ENCODE measurements at regions of chr2 and their contacts with region 1.

Region 1: GRCh38 chr2:24075915-24076848 is at the start of gene SF3B6:
- DNase-seq: peak; percentile 100
- ATAC-seq: peak; percentile 88
- H3K4me3 ChIP-seq: peak within 1 kb of the TSS; percentile 97
- H3K27ac ChIP-seq: peak within 1 kb of the TSS; percentile 49
- H3K4me1 ChIP-seq: peaks cover 13% of the 10 kb centered on the region
- H3K27me3 ChIP-seq: no peaks in the 10 kb centered on the region
- CTCF ChIP-seq: no peak
- total RNA-seq, gene SF3B6: 139 and 220 TPM in 2 replicates

Region 2: GRCh38 chr2:23734416-23734815 is 341.8 kb before region 1 on chr2:
- CTCF ChIA-PET with region 1: no interaction called
- POLR2A ChIA-PET with region 1: no interaction called
- intact Hi-C with region 1: no loop called
- DNase-seq: no peak
- ATAC-seq: no peak
- H3K4me3 ChIP-seq: no peak overlapping the region
- H3K27ac ChIP-seq: no peak overlapping the region
- H3K4me1 ChIP-seq: no peaks in the 10 kb centered on the region
- H3K27me3 ChIP-seq: no peaks in the 10 kb centered on the region
- CTCF ChIP-seq: no peak

Region 3: DNA sequence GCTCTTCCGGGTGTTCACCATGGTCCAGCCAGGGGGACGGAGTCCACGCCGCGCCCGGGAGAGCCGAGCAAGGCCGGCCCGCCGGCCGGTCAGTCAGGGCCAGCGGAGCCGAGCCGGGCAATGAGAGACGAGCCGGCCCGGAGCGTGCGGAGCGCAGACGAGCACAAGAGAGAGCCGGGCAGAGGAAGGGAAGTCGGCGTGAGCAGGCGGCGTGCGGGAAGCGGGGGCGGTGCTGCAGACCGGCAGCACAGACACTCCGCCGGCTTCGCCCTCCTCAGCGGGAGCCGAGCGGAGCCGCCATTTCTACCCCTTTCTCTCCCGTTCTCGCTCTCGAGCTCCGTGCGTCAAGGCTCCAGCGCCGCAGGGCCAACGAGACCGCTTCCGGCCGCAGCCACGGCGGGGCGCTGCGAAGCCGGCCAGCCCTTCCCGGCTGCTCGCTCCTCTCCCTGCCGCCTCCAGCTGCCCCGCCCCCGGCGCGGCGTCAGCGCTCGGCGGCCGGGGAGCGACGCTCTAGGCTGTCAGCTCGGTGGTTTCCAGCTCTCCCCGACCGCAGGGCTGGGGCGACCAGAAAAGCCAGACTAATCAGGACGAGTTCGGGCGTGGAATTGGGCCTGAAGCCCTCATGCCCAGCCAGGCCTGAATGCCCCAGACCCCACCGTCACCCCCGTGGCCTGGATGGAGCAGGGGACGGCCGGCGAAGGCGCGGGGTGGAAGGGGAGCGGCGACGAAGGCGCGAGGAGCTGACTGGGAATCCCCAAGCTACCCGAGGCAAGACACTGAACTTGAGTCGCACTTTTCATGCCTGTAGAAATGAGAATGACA is 149.2 kb before region 1 on chr2 and contains the start of gene ATAD2B:
- CTCF ChIA-PET with region 1: interaction called, 11 read pairs
- POLR2A ChIA-PET with region 1: interaction called, 15 read pairs
- intact Hi-C with region 1: no loop called
- DNase-seq: peak; percentile 98
- ATAC-seq: peak; percentile 85
- H3K4me3 ChIP-seq: peak within 1 kb of the TSS; percentile 89
- H3K27ac ChIP-seq: peak within 1 kb of the TSS; percentile 85
- H3K4me1 ChIP-seq: peaks cover 17% of the 10 kb centered on the region
- H3K27me3 ChIP-seq: no peaks in the 10 kb centered on the region
- CTCF ChIP-seq: peak; percentile 83
- total RNA-seq, gene ATAD2B: 8.6 TPM in 2 replicates

Region 4: DNA sequence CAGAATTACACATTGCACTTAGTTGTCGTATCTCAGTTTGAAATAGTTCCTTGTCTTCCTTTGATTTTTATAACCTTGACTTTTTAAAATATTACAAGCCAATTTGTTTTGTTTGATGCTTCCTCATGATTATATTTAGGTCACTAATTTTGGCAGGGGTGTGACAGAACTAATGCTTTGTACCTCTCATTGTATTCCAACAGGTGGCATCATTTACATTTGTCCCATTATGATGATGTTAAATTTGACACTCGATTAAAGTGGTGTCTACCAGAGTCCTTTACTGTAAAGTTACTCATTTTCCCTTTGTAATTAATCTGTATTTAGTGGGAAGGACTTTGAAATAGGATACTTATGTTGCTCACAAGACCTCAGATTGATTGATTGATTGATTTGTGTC is 87.8 kb before region 1 on chr2:
- CTCF ChIA-PET with region 1: no interaction called
- POLR2A ChIA-PET with region 1: no interaction called
- intact Hi-C with region 1: no loop called
- DNase-seq: peak; percentile 62
- ATAC-seq: peak; percentile 88
- H3K4me3 ChIP-seq: no peak overlapping the region
- H3K27ac ChIP-seq: no peak overlapping the region
- H3K4me1 ChIP-seq: no peaks in the 10 kb centered on the region
- H3K27me3 ChIP-seq: no peaks in the 10 kb centered on the region
- CTCF ChIP-seq: peak; percentile 80

Region 5: DNA sequence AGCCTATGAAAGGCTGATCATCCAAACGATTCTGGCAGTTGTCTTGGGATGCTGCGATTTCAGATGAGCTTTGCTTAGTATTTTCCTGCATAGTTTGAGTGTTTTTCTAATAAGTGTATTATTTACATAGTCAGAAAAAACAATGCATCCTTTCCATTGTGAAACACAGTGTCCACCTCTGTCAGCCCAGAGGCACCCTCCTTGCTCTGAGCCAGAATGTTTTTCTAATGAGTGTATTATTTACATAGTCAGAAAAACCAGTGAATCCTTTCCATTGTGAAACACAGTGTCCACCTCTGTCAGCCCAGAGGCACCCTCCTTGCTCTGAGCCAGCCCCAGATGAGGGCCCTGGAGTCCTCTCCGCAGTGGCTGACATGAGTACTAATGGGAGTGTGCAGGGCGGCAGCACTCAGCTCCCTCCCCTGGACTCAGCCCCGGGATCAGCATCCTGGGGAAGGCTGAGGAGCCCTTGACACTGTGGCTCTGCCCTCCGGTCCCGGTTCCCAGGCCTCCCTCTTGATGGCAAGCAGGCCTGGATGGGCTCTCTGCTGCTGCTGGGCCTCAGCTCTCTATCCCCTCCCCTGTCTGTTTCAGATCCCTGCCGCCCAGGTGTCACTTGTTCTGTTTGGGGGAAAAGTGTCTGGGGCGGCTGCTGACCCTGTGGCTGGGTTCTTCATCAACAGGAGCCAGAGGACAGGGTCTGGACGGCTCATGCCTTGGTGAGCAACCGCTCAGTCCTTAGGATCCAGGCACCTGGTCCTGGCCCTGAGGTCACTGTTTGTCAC is 60.4 kb before region 1 on chr2:
- CTCF ChIA-PET with region 1: interaction called, 3 read pairs
- POLR2A ChIA-PET with region 1: interaction called, 5 read pairs
- intact Hi-C with region 1: loop called (anchors 1 kb)
- DNase-seq: peak; percentile 98
- ATAC-seq: peak; percentile 94
- H3K4me3 ChIP-seq: no peak overlapping the region
- H3K27ac ChIP-seq: peak overlapping the region; percentile 79
- H3K4me1 ChIP-seq: peaks cover 46% of the 10 kb centered on the region
- H3K27me3 ChIP-seq: no peaks in the 10 kb centered on the region
- CTCF ChIP-seq: no peak

Region 6: DNA sequence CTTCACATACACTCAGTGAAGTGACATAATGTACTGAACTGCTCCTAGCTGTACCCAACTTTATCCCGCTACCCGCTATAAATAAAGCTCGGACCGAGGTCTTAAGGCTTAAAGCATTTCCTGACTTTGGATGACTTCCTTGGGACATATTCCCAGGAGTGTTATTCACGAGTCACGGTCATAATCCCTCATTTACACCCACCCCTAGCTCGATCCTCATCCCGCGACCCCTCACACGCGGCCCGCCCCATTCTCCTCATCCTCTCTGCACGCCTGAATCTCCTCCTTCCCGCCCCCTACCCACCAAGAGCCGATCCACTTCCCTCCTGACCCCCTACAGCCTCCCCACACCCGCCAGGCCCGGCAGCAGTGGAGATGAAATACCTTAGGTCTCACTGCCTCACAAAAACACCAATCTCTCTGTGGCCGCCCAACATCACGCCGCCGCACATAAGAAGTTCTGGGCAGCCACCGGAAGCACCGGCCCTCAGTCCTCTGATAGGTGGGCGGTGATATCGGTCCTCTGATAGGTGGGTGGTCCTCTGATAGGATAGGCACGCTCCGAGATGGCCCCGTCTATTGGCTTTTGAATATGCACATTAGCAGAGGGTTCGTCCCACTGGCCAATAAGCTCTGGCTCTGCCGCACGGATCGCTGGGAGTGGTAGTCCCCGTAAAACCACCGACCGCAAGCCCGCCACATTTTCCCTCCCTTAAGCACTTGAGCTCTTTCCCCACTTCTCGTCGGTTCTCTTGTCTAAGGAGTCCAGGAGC is 29.1 kb before region 1 on chr2 and contains the start of gene WDCP:
- CTCF ChIA-PET with region 1: interaction called, 8 read pairs
- POLR2A ChIA-PET with region 1: no interaction called
- intact Hi-C with region 1: loop called (anchors 1 kb)
- DNase-seq: peak; percentile 98
- ATAC-seq: peak; percentile 99
- H3K4me3 ChIP-seq: peak within 1 kb of the TSS; percentile 91
- H3K27ac ChIP-seq: no peak within 1 kb of the TSS
- H3K4me1 ChIP-seq: peaks cover 11% of the 10 kb centered on the region
- H3K27me3 ChIP-seq: no peaks in the 10 kb centered on the region
- CTCF ChIP-seq: no peak
- total RNA-seq, gene WDCP: 5.6 and 11.5 TPM in 2 replicates

Region 7: GRCh38 chr2:24214880-24215279 is 138.7 kb after region 1 on chr2:
- CTCF ChIA-PET with region 1: no interaction called
- POLR2A ChIA-PET with region 1: interaction called, 23 read pairs
- intact Hi-C with region 1: no loop called
- DNase-seq: no peak
- ATAC-seq: no peak
- H3K4me3 ChIP-seq: no peak overlapping the region
- H3K27ac ChIP-seq: no peak overlapping the region
- H3K4me1 ChIP-seq: no peaks in the 10 kb centered on the region
- H3K27me3 ChIP-seq: no peaks in the 10 kb centered on the region
- CTCF ChIP-seq: no peak

Measured in PC-3 (cell line).